MCF 10A (cell line): ENCODE measurements at regions of chr16 and their contacts with region 1.

Region 1: GRCh38 chr16:89686520-89687091 is at the start of gene CDK10:
- DNase-seq: peak; percentile 85
- H3K4me3 Mint-ChIP-seq: peak within 1 kb of the TSS; percentile 88
- H3K27ac Mint-ChIP-seq: peak within 1 kb of the TSS; percentile 91
- H3K4me1 Mint-ChIP-seq: peaks cover 6% of the 10 kb centered on the region
- H3K27me3 Mint-ChIP-seq: no peaks in the 10 kb centered on the region
- CTCF ChIP-seq: no peak
- total RNA-seq, gene CDK10: 73.0 and 83.4 TPM in 2 replicates

Region 2: DNA sequence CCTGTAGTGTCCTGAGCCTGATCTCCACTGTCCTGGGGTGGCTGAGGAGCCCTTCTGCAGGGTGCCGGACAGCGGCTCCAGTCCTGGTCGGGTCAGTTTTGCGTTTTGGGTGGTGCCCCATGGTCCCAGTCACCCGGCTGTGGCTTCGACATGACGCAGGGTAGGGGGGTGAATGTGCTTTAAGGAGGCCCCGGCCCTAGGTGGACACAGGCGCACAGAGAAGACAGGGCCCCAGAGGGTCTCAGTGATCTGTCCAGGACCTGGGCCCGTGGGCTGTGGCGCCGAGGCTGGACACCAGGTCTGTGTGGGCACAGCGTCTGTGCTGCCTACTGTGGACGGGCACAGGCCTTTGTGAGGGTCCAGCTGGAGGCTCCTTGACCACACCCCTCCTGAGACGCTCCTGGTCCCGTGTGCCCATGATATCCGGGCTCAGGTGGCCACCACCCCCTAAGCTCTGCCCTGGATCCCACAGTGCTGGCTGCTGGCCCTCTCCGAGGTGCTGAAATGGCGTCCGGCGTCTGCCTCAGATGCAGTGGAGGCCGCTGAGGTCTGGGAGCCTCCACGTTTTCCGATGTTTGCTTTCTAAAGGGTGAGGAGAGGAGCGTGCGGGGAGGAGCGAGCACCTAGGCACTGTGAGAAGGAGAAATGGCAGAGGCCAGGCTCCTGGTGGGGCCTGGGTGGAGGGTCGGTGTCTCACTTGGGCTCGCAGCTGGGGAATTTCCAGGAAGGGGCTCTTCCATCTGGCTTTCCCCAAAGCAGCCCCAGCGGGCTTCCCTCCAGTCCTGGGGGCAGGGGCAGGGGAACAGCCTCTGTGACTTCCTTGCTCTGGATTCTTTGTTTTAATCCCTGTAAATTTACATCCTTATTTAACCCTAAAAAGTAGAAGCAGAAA is 649.1 kb before region 1 on chr16:
- CTCF ChIA-PET with region 1: no interaction called
- POLR2A ChIA-PET with region 1: no interaction called
- intact Hi-C with region 1: no loop called
- DNase-seq: peak; percentile 20
- H3K4me3 Mint-ChIP-seq: no peak overlapping the region
- H3K27ac Mint-ChIP-seq: no peak overlapping the region
- H3K4me1 Mint-ChIP-seq: no peaks in the 10 kb centered on the region
- H3K27me3 Mint-ChIP-seq: peaks cover 67% of the 10 kb centered on the region
- CTCF ChIP-seq: no peak

Region 3: DNA sequence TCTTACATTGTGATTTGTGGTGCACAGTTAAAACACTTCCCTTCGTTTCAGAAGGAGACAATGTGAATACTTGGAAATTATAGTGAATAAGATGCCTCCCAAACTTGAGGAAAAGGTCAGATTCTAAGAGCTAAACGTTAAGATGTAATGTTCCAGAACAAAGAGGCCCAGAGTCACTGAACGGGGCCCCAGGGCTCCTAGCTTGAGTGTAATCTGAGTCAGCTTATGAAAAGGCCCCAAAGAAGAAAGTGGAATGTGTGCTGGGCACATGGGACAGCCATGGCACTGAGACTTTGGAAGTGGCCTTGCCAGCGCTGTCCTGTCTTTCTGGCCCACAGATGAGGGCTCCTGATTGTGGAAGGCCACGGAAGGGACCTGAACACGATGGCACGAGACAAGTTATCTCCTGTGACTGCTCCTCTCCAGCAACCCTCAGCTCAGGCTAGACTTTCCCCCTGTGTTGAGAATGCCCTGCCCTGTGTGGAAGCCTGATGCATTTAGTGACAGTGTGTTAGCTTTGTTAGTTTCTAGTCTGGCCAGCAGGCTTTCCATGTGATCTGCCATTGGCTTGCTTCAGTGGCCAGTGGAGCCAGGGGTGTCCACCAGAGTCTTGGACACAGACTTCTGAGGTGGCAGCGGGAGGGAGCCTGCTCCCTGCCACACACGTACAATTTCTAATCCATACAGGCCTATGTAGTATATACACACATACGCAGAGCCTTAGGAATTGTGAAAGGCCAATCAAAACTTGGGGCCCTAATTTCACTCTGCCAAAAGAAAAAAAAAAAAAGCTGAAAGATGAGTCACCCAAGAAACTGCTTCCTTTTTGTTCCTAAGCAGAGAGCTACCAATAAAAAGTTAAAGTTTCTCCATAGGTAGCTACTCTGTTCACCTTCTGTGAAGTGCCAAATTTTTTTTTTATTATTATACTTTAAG is 15.8 kb before region 1 on chr16:
- CTCF ChIA-PET with region 1: interaction called, 4 read pairs
- POLR2A ChIA-PET with region 1: interaction called, 12 read pairs
- intact Hi-C with region 1: no loop called
- DNase-seq: peak; percentile 51
- H3K4me3 Mint-ChIP-seq: no peak overlapping the region
- H3K27ac Mint-ChIP-seq: peak overlapping the region; percentile 12
- H3K4me1 Mint-ChIP-seq: no peaks in the 10 kb centered on the region
- H3K27me3 Mint-ChIP-seq: no peaks in the 10 kb centered on the region
- CTCF ChIP-seq: no peak

Region 4: GRCh38 chr16:89720813-89721545 is 34.4 kb after region 1 on chr16 and contains the starts of genes VPS9D1 and ZNF276:
- CTCF ChIA-PET with region 1: no interaction called
- POLR2A ChIA-PET with region 1: interaction called, 12 read pairs
- intact Hi-C with region 1: no loop called
- DNase-seq: peak; percentile 83
- H3K4me3 Mint-ChIP-seq: peak within 1 kb of the TSS; percentile 82
- H3K27ac Mint-ChIP-seq: peak within 1 kb of the TSS; percentile 71
- H3K4me1 Mint-ChIP-seq: peaks cover 25% of the 10 kb centered on the region
- H3K27me3 Mint-ChIP-seq: no peaks in the 10 kb centered on the region
- CTCF ChIP-seq: no peak
- total RNA-seq, gene VPS9D1: 12.0 and 13.2 TPM in 2 replicates
- total RNA-seq, gene ZNF276: 32.7 and 33.6 TPM in 2 replicates

Region 5: GRCh38 chr16:89764711-89765201 is 78.2 kb after region 1 on chr16:
- CTCF ChIA-PET with region 1: no interaction called
- POLR2A ChIA-PET with region 1: no interaction called
- intact Hi-C with region 1: no loop called
- DNase-seq: no peak
- H3K4me3 Mint-ChIP-seq: no peak overlapping the region
- H3K27ac Mint-ChIP-seq: no peak overlapping the region
- H3K4me1 Mint-ChIP-seq: no peaks in the 10 kb centered on the region
- H3K27me3 Mint-ChIP-seq: no peaks in the 10 kb centered on the region
- CTCF ChIP-seq: no peak